Right cardiac atrium (tissue), 5 donors: ENCODE measurements at regions of chr17 and their contacts with region 1.

Region 1: GRCh38 chr17:4565209-4566141 is 5.1 kb upstream of the GGT6 start:
- DNase-seq: peak; percentile 66 to 84 (median 79)
- ATAC-seq: peak; percentile 80
- H3K4me3 ChIP-seq: no peak overlapping the region
- H3K27ac ChIP-seq: peak overlapping the region; percentile 25
- H3K4me1 ChIP-seq: peaks cover 1% of the 10 kb centered on the region
- H3K27me3 ChIP-seq: no peaks in the 10 kb centered on the region

Region 2: DNA sequence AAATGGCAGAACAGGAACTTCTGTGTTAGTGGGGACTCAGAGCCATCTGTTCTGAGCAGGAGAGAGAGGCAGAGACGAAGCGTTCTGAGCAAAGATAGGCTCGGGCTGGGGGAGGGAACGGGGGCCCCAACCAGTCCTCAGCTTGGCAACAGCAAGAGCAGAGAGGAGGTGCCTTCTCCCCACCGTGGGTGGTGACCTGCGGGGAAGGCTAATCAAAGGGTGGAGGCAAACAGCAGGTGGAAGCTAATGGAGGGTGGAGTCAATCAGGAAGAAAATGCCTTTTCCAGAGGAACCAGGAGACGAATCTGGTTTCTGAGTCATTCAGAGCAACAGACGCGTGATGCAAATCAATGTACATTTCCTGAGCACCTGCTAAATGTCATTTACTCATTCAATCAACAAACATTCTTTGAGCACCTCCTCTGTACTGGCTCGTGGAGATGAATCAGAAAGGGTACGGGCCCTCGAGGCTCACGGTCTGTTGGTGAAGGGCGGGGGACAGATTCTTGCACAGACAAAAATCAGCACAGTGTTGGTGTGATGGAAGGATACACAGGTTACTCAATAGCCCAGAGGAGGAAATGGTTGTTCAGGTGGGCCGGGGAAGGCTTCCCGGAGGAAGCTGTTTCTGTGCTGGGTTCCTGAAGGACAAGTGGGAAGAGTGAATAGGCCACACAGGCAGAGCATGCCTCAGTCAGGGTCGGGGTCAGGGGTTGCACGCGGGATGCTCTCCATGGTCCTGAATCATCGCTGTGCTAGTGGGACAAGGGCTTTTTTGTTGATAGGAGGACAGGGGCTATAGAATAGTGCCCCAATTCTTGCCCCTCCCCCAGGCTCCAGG is 72.5 kb before region 1 on chr17:
- intact Hi-C with region 1: no loop called
- DNase-seq: peak in 2 of 3 donors; percentile 77
- ATAC-seq: peak in 1 of 2 donors; percentile 26
- H3K4me3 ChIP-seq: no peak overlapping the region
- H3K27ac ChIP-seq: no peak overlapping the region
- H3K4me1 ChIP-seq: no peaks in the 10 kb centered on the region
- H3K27me3 ChIP-seq: no peaks in the 10 kb centered on the region

Region 3: GRCh38 chr17:4607773-4608187 is 42.3 kb after region 1 on chr17:
- intact Hi-C with region 1: no loop called
- DNase-seq: peak; percentile 87 to 92 (median 90)
- ATAC-seq: peak; percentile 53 to 63
- H3K4me3 ChIP-seq: no peak overlapping the region
- H3K27ac ChIP-seq: no peak overlapping the region
- H3K4me1 ChIP-seq: peaks cover 5% of the 10 kb centered on the region
- H3K27me3 ChIP-seq: no peaks in the 10 kb centered on the region

Region 4: DNA sequence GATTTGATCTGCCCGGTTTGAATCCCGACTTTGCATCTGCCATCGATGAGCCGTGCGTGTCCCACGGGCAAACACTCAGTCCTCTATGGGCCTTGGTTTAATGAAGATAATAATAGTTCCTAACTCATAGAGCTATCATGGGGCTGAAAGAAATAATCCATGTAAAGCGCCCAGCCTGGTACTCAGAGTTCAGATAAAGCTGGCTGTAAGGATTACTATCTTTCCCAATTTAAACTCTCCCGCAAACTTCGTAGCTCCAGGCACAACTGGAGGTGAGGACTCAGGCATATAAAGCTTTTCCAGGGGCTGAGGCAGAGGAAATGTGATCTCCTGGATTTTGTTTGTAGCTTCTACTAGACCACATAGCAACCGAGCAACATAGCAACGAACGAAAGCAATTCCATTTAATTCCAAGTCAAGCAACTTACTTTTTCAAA is 59.7 kb after region 1 on chr17:
- intact Hi-C with region 1: loop called (anchors 2 to 5 kb)
- DNase-seq: no peak
- ATAC-seq: peak in 1 of 2 donors; percentile 69
- H3K4me3 ChIP-seq: no peak overlapping the region
- H3K27ac ChIP-seq: no peak overlapping the region
- H3K4me1 ChIP-seq: no peaks in the 10 kb centered on the region
- H3K27me3 ChIP-seq: no peaks in the 10 kb centered on the region

Region 5: DNA sequence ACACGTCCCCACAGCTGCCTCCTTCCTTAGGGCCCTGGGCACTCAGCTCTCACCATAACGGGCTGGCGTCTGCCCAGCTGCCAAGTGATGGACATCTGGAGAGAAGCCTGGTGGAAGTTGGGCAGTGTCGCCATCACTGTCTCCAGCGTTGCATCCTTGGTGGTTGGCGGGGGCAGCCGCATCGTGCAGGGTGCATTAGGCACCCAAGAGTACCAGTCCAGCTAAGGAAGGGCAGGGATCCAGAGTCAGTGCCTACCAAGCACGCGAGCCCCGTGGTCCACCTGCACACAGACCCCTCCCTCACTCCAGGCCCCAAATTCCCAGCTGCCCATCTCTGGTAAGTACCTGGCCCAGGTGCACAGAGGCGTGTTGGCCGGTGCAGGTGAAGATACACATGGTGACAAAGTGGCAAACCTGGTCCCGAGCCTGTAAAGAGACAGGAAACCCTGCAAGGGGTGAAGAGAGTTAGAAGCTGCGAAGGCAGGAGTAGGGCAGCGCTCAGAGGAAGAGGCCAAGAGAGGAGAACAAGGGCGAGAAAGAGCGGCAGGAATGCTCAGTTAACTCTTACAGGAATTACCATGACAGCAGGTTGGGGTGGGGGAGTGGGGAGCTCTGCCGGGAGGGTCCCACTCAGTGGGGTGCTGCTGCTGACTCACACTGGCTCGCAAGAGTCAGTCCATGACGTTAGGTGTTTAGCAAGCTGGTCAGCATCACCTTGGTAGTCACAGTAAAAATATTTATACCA is 66.5 kb after region 1 on chr17:
- intact Hi-C with region 1: loop called in 2 of 4 experiments (anchors 5 kb)
- DNase-seq: no peak
- ATAC-seq: no peak
- H3K4me3 ChIP-seq: no peak overlapping the region
- H3K27ac ChIP-seq: no peak overlapping the region
- H3K4me1 ChIP-seq: no peaks in the 10 kb centered on the region
- H3K27me3 ChIP-seq: no peaks in the 10 kb centered on the region